ENCODE measurements at regions of chr19 and their contacts with region 1.

Region 1: GRCh38 chr19:16111160-16111908 is at the start of gene RAB8A:
- DNase-seq: peak; percentile 99 to 100 (median 100)
- ATAC-seq: peak; percentile 95
- H3K4me3 ChIP-seq: peak within 1 kb of the TSS; percentile 63
- H3K4me1 ChIP-seq: peaks cover 32% of the 10 kb centered on the region
- CTCF ChIP-seq: peak; percentile 99
- total RNA-seq, gene RAB8A: 85.5 to 129 (median 119) TPM

Region 2: GRCh38 chr19:16062789-16063188 is 48.5 kb before region 1 on chr19:
- intact Hi-C with region 1: loop called in 1 of 2 experiments (anchors 10 kb)
- DNase-seq: peak; percentile 64 to 83 (median 78)
- ATAC-seq: peak; percentile 55
- H3K4me3 ChIP-seq: no peak overlapping the region
- H3K4me1 ChIP-seq: peaks cover 9% of the 10 kb centered on the region
- CTCF ChIP-seq: peak; percentile 85